ENCODE measurements at regions of chrX and their contacts with region 1.

Region 1: DNA sequence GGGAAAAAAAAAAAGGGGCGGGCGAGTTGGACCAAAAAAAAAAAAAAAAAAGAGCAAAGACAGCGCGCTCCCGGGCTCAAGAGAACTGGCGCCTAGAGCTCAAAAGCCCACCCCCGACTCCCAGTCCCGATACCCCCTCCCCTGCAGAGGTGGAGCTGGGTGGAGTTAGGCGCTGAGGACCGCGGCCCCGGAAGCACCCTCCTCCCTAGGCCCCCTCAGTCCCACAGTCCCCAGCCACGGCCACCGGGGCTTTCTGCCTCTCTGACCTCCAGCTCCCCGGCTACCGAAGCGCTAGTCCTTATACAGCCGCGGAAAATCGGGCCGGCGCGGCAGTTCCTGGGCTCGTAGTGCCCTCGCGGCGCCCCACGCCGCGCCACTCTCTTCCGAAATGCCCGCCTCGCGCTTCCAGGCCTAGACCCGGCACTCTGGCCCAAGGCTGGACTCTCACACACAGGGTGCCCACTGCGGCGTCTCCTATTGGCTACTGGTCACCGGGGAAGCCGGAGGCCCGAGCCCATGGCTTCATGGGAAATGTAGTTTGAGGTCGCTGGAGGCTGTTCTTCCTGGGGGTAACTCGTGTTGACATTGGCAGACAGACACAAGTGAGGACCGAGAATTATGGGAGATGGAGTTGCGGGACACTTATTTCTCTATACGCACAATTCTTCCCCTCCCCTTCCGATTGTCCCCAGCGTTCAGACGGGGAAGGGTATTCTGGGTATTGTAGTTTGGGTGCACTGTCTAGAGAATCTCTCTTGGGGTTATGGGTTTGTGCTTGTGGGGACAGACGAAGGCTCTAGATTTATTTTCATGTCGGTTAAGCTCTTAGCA is at the start of gene ENOX2:
- DNase-seq: peak; percentile 78
- CTCF ChIP-seq: no peak

Region 2: DNA sequence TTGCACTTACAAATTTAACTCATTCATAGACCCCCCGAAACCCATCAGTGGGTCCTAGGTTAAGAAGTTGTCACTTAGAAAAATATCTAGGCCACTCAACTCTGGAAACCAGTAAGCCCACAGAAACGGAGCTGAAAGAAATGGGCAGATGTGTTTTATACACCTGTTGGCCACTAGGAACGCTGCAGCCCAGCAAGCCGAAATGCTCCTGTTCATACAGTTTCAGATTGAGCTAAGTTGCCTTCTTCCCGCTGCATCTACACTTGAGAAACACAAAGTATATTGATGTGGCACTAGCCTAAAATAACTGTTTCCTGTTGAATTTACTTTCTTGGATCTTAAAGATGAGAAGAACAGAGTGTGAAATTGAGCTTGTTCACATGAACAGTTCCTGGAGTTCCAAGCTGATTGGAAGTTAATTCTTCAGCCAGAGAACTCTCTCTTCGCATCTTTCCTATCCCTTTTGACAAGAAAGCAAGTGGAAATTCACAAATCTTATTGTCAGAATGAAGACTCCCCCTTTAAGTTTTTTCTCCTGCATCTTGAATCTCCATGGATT is 327.1 kb before region 1 on chrX:
- in situ Hi-C with region 1: loop called (anchors 25 kb)
- DNase-seq: peak; percentile 50
- CTCF ChIP-seq: peak; percentile 58

Region 3: DNA sequence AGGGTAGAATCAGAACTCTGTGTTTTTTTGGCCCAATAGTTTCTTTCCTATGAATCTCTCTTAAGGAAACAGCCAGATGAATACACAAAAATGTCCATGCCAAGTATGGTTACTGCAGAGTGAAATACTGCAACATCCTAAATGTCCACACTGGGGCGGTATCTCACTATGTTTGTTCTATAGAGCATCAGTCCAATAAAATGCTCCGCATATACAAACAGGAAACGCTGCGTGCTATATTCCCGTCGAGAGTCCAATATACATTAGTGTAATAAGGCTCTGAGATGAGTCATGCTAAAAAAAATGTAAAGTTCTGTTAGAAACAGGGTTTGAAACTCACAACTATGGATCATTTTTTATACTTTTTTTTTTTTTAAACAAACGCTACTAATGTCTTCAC is 72.9 kb after region 1 on chrX:
- in situ Hi-C with region 1: no loop called
- DNase-seq: peak; percentile 32
- CTCF ChIP-seq: peak; percentile 70